Endothelial cell of umbilical vein (primary cell): ENCODE measurements at regions of chr1 and their contacts with region 1.

Region 1: DNA sequence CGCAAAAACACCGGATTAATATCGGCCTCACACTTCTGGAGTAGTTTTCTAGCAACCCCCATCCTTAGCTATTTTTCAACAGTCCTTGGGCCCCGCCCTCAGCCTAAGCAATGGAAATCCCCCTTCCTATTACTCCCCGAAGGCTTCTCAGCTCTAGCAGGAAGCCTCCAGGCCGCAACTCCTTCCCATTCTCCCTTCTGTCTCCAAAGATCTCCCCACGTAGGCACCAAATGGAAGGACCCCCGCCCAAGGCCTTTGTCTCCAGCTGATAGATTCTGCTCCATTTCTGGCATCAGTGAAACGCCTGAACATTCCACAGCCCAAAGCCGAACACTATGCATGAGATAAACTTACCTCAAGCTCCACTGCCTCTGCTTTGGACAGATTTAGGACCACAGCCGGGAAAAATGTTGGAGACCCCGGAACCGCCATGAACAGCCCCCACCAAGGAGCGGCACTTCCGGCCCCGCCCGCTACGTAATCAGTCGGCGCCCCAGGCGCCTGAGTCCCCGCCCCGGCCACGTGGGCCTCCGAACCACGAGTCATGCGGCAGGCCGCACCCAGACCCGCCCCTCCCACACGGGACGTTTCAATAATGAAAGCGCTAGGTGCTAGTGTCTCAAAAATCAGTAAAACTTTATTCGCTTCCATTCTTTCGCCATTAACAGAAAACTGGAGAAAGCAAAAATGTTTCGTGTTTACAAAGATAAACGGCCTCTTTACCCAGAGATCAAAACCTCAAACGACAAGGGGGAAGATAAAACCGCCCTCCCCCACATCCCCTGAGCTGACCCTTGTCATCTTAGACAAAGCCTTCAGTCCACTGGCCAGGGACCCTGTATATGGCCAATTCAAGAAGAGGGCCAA is at the start of gene NRAS:
- DNase-seq: peak; percentile 91
- H3K4me3 ChIP-seq: peak within 1 kb of the TSS; percentile 94 to 100 (median 100)
- H3K27ac ChIP-seq: peak within 1 kb of the TSS; percentile 100
- H3K4me1 ChIP-seq: peaks cover 24% of the 10 kb centered on the region
- H3K27me3 ChIP-seq: no peaks in the 10 kb centered on the region
- CTCF ChIP-seq: no peak
- POLR2A ChIP-seq: peak; percentile 85
- total RNA-seq, gene NRAS: 76.5 and 78.7 TPM in 2 replicates

Region 2: DNA sequence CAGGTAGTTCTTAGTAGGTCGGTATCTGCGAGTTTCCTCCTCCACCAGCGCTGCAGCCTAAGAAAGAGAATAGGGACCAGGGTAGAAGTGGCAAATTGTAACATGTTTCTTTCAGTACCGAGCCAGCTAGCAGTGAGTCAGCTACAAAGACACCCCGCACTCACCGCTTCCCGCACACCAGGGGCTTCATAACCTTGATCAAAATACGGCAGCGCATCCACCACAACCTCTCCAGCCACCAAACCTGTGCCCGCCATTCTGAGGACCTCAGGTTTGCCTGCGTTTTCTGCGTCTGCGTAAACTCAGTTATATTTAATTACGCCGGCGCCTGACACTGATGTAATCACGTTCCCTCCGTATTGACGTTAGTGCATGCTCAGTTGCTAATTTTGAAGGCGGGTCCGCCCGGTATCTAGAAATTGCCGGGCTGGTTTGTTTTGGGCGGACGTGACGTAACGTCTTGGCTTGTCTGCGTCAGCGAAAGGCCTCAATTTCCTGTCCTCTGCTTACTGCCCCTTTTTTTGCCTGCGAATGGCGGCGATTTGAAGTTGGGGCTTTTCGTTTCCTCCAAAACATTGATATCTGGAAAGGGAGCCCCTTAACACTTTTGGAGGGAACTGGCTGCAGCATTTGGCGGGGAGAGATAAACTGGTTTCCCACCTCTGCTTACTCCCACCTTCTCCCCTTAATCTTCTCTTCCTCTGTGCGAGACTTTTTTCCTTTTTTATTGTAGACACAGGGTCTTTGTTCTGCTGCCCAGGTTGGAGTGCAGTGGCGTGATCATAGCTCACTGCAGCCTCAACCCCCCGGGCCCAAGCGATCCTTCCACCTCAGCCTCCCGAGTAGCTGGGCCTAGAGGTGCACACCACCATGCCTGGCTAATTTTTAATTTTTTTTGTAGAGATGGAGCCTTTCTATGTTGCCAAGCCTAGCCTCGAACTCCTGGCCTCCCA is 134.9 kb before region 1 on chr1 and contains the start of gene BCAS2:
- CTCF ChIA-PET with region 1: no interaction called
- POLR2A ChIA-PET with region 1: no interaction called
- dilution Hi-C with region 1: no loop called
- intact Hi-C with region 1: loop called (anchors 2 kb)
- DNase-seq: peak; percentile 98
- H3K4me3 ChIP-seq: peak within 1 kb of the TSS; percentile 66 to 96 (median 85)
- H3K27ac ChIP-seq: peak within 1 kb of the TSS; percentile 68
- H3K4me1 ChIP-seq: peaks cover 7% of the 10 kb centered on the region
- H3K27me3 ChIP-seq: no peaks in the 10 kb centered on the region
- CTCF ChIP-seq: no peak
- POLR2A ChIP-seq: peak; percentile 93
- total RNA-seq, gene BCAS2: 41.7 and 43.5 TPM in 2 replicates

Region 3: DNA sequence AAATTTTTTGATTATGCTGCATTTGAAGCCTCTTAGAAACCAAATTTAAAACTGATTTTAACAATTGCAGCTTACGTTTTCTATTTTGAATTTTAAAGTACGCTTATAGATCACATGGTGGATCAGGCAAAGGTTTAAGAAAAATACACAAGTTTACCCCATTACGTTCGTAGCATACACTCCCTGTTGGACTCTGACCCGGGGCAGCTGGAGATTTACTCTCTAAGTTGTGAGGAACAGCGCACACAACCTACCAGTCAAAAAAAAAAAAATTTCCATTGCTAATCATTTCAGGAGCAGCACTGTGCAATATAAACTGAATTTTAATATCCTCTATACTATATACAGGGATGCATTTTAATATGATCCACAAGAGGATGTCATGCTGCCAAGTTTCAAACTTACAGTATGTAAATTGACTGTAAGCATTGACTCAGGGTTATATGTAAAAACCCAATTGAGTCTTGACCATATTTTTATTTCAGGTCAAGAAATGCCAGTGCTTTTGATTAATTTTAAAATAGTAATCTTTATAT is 20.8 kb after region 1 on chr1:
- CTCF ChIA-PET with region 1: interaction called, 3 read pairs
- POLR2A ChIA-PET with region 1: no interaction called
- dilution Hi-C with region 1: no loop called
- intact Hi-C with region 1: loop called (anchors 2 kb)
- DNase-seq: no peak
- H3K4me3 ChIP-seq: no peak overlapping the region
- H3K27ac ChIP-seq: no peak overlapping the region
- H3K4me1 ChIP-seq: no peaks in the 10 kb centered on the region
- H3K27me3 ChIP-seq: no peaks in the 10 kb centered on the region
- CTCF ChIP-seq: no peak
- POLR2A ChIP-seq: no peak

Region 4: DNA sequence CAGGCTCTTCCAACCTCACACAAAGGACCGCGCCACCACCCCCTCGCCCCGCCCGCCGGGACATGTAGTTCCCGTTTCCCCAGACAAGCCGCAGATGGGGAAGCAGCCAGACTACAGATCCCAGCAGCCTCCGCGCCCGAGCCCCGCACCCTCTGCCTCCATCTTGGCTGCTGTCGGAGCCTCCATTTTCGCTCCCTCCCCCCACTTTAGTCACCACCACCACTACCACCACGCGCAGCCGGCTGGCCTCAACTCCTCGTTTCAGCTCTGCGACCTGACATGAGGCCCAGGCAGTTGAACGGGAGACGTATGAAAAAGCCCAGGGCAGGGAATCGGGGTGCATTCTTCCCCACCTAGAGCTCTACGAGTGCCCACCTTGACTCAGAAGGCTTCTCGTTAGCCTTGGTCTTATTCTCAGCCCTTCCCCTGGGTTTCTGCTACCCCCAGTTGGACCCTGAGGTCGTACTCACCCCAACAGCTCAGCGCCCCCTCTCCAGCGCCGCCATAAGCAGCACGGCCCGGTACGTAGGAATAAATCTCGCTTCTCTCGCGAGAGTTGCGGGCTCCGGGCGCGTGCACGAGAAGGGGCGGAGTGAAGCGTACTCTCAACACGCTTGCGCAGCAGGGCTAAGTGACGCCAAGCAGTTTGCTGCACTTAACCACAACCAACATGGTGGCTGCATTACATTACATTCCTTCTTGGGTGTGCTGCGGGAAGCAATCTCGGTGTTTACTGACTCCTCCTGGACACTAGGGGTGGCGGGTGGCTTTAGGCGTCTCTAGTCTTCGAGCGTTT is 41.1 kb after region 1 on chr1 and contains the start of gene CSDE1:
- CTCF ChIA-PET with region 1: no interaction called
- POLR2A ChIA-PET with region 1: no interaction called
- dilution Hi-C with region 1: no loop called
- intact Hi-C with region 1: loop called (anchors 1 kb)
- DNase-seq: peak; percentile 99
- H3K4me3 ChIP-seq: peak within 1 kb of the TSS; percentile 75 to 93 (median 91)
- H3K27ac ChIP-seq: peak within 1 kb of the TSS; percentile 98
- H3K4me1 ChIP-seq: peaks cover 28% of the 10 kb centered on the region
- H3K27me3 ChIP-seq: no peaks in the 10 kb centered on the region
- CTCF ChIP-seq: peak; percentile 31 to 36
- POLR2A ChIP-seq: peak; percentile 91
- total RNA-seq, gene CSDE1: 486 and 492 TPM in 2 replicates

Region 5: DNA sequence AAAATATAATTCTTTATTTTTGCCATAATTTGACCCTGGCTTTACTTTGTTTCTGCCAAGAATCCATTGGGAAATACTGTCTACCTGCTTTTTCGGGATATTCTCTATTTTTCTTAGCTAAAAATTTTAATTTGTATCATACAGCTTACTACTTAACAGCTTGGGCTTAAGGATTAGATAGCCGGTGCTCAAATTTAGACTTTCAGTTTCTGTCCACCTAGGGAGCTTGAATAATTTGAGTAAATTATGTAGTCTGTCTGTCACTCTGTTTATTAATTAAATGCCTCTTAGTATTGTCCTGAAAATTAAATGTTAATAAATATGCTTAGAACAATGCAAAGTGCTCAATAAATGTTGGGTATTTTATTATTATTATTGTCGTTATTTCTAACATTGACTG is 144.8 kb after region 1 on chr1:
- CTCF ChIA-PET with region 1: no interaction called
- POLR2A ChIA-PET with region 1: no interaction called
- dilution Hi-C with region 1: no loop called
- intact Hi-C with region 1: no loop called
- DNase-seq: no peak
- H3K4me3 ChIP-seq: no peak overlapping the region
- H3K27ac ChIP-seq: no peak overlapping the region
- H3K4me1 ChIP-seq: no peaks in the 10 kb centered on the region
- H3K27me3 ChIP-seq: peaks cover 0 to 10% of the 10 kb centered on the region in 2 experiments
- CTCF ChIP-seq: no peak
- POLR2A ChIP-seq: no peak